Sigmoid colon (tissue), 7 donors: ENCODE measurements at regions of chr6 and their contacts with region 1.

Region 1: DNA sequence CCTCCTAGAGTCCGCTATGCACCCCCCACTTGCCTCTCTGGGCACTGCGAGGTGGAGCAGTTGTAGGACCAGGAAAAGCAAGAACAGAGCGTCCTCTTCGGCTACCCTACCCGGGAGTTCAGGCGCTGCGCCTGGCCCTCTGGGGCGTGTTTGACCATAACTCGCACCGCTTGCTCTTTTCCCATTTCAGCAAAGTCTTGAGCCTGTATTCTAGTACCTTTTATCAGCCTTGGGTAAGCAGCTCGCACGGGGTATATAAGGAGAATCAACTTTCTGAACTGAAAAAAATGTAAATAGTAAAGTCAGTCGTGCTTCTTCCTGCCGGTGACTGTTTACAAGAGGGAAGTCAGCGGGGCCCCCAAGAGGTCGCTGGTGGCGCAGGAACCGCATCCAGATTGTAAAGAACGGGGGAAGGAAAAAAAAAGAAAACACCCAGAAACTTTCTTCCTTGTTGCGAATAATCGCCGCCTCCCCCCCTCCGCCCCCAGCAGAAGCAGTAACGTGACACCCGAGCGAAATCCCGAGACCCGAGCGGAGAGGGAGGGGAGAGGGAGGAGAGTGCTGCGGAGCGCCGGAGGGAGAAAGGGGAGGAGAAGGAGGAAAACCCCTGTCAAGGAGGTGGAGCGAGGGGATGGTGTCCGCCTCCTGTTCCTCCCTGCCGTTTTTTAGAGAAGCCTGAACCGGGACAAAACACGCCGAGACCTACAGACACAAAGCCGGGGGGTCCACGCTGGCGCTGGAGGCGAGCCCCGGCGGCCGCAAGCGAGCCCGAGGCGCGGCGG is at the start of gene UST:
- DNase-seq: peak; percentile 96
- H3K4me3 ChIP-seq: peak within 1 kb of the TSS; percentile 69 to 94 (median 92)
- H3K27ac ChIP-seq: peak within 1 kb of the TSS; percentile 88 to 98 (median 90)
- H3K4me1 ChIP-seq: peaks cover 0 to 25% (median 15%) of the 10 kb centered on the region in 4 donors
- H3K27me3 ChIP-seq: no peaks in the 10 kb centered on the region
- CTCF ChIP-seq: peak in 2 of 4 experiments; percentile 28 to 30
- EP300 ChIP-seq: peak in 3 of 4 donors; percentile 8 to 44 (median 16)
- POLR2A ChIP-seq: peak in 1 of 2 donors; percentile 34
- total RNA-seq, gene UST: 21.8 to 35.2 (median 24.5) TPM

Region 2: DNA sequence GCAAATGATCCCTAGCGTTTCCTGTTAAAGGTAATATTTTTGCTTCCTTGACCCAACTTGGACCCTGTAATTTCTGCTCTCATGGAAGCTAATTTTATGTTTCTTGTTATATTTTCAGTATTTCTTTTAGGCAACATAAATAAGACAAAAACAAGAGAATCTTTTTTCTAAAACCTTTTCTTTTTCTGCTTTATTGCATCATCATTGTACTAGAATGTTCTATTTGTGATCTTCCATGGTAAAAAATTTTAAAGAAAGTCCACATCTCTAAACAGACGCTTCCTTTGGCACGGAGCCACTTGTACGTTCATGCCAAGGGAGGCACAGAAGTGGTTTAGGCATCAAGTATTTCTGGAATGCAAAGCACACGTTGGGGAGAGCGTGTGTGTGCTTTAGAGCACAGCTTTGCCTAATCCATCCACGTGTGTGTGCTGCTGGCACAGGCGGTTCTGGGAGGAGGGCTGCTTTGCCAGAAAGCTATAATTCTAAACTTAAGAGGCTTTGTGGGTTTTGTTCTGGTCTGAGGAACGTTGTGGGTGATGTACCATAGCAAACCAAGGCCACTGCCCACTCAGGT is 305.6 kb before region 1 on chr6:
- intact Hi-C with region 1: no loop called
- DNase-seq: peak; percentile 75
- H3K4me3 ChIP-seq: no peak overlapping the region
- H3K27ac ChIP-seq: peak overlapping the region; percentile 36 to 73 (median 54)
- H3K4me1 ChIP-seq: peaks cover 0 to 15% (median 14%) of the 10 kb centered on the region in 4 donors
- H3K27me3 ChIP-seq: no peaks in the 10 kb centered on the region
- CTCF ChIP-seq: no peak
- EP300 ChIP-seq: no peak
- POLR2A ChIP-seq: no peak

Region 3: DNA sequence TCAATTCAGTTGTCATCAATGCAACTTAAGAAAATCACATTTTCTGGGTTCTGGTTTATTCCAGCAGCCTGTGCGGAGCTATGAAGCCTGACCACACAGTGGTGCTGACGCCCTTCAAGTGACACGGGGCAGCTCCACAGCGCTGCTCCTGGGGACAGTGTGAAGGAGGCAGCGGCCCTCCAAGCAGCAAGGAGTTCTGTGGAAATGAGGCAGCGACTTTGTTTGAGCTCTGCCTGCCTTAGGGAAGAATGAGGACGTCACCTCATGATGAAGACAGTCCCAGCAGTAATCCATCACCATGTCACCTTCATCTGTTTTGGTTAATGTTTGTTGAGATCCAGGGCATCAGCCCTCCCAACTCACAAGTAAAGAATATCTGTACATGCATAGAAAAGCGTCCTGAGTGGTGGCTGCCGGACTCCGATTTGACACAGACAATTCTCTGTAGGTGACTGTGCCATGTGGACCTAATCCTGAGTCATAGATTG is 168.3 kb before region 1 on chr6:
- intact Hi-C with region 1: loop called (anchors 5 kb)
- DNase-seq: peak; percentile 92
- H3K4me3 ChIP-seq: no peak overlapping the region
- H3K27ac ChIP-seq: peak overlapping the region in 1 of 4 donors; percentile 27
- H3K4me1 ChIP-seq: peaks cover 0 to 13% (median 4%) of the 10 kb centered on the region in 4 donors
- H3K27me3 ChIP-seq: no peaks in the 10 kb centered on the region
- CTCF ChIP-seq: peak; percentile 81 to 91 (median 84)
- EP300 ChIP-seq: no peak
- POLR2A ChIP-seq: no peak

Region 4: DNA sequence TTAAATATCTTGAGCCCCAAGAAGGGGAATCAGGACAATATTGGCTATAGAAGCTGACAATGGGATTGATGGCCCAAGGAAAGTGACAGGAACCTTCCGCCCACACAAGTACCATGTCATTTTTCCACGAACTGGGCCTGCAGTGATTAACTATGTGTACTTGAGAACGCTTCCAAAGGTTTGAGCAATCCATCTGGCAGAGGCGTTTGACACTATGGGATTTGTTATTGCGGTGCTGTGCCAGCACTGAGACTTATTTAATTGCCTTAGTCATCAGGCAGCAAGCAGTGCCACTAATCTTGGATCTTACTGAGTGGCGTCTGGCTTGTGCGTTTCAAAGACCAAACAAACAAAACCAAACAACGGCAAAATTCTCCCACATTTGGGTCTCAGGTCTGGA is 135.3 kb before region 1 on chr6:
- intact Hi-C with region 1: loop called (anchors 5 kb)
- DNase-seq: peak; percentile 92
- H3K4me3 ChIP-seq: no peak overlapping the region
- H3K27ac ChIP-seq: peak overlapping the region; percentile 50 to 63 (median 60)
- H3K4me1 ChIP-seq: peaks cover 0 to 40% (median 29%) of the 10 kb centered on the region in 4 donors
- H3K27me3 ChIP-seq: no peaks in the 10 kb centered on the region
- CTCF ChIP-seq: no peak
- EP300 ChIP-seq: peak in 3 of 4 donors; percentile 0 to 47 (median 38)
- POLR2A ChIP-seq: no peak

Region 5: GRCh38 chr6:148885136-148885870 is 138.7 kb after region 1 on chr6:
- intact Hi-C with region 1: loop called (anchors 5 kb)
- DNase-seq: no peak
- H3K4me3 ChIP-seq: no peak overlapping the region
- H3K27ac ChIP-seq: peak overlapping the region; percentile 23 to 74 (median 51)
- H3K4me1 ChIP-seq: peaks cover 0 to 60% (median 46%) of the 10 kb centered on the region in 4 donors
- H3K27me3 ChIP-seq: no peaks in the 10 kb centered on the region
- CTCF ChIP-seq: no peak
- EP300 ChIP-seq: peak in 1 of 4 donors; percentile 35
- POLR2A ChIP-seq: no peak

Region 6: DNA sequence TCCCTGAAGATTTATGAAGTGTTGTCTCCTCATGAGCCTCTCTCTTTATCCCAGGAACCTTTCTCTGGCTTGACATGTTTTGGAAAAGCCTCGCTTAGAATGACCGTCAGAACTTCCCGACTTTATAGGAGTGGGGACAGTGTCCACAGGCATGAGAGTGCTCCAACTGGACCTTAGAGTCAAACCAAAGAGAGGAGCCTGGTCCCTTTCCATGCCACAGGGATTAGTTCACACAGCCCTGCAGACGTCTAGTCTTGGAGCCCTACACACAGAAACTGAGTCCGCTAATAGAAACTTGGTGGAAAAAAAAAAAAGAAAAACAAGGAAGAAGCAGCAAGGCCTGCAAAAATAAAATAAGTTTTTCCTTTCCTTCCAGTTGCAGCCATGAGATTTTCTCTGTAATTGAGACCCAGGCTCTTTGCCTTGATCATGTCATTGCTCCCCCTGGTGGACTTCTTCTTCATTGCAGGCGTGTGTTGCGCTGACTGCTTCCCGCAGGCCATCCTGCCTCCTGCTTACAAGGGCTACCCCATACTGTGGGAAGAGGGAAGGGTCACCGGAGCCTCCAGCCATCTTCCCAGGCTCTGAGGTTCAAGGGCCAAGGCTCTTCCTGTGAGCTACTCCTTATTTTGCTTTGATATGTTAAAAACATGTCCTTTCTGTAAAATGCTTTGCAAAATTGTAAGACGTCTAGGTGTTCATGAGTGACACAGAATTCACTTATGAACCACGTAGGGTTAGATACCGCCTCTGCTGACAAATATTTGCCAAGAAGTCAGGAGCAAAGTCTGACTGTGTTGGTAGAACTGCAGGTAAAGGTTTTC is 201.3 kb after region 1 on chr6:
- intact Hi-C with region 1: loop called (anchors 2 kb)
- DNase-seq: peak; percentile 90
- H3K4me3 ChIP-seq: no peak overlapping the region
- H3K27ac ChIP-seq: no peak overlapping the region
- H3K4me1 ChIP-seq: peaks cover 0 to 74% (median 45%) of the 10 kb centered on the region in 4 donors
- H3K27me3 ChIP-seq: no peaks in the 10 kb centered on the region
- CTCF ChIP-seq: peak; percentile 71 to 92 (median 88)
- EP300 ChIP-seq: no peak
- POLR2A ChIP-seq: no peak

Region 7: DNA sequence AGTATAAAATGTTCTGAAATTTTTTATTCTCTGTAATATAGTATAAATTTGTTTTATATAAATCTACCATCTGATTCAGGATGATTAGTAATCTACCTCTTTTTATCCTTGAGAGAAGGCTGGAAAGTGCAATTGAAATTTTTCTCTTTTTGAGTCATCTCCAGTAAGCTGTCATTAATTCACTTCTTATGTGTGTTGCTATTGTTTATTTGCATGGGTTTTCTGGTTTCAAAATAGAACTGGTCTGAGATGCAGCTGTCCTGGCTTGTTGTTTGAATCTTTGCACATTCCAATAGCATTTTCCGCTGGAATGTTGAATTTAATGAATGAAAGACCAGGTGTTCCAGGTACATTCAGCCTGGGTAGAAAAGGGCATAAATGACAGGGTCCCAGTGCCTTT is 546.7 kb after region 1 on chr6:
- intact Hi-C with region 1: no loop called
- DNase-seq: no peak
- H3K4me3 ChIP-seq: no peak overlapping the region
- H3K27ac ChIP-seq: no peak overlapping the region
- H3K4me1 ChIP-seq: no peaks in the 10 kb centered on the region
- H3K27me3 ChIP-seq: no peaks in the 10 kb centered on the region
- CTCF ChIP-seq: no peak
- EP300 ChIP-seq: no peak
- POLR2A ChIP-seq: no peak